GM12878 (cell line): ENCODE measurements at regions of chr17 and their contacts with region 1.

Region 1: DNA sequence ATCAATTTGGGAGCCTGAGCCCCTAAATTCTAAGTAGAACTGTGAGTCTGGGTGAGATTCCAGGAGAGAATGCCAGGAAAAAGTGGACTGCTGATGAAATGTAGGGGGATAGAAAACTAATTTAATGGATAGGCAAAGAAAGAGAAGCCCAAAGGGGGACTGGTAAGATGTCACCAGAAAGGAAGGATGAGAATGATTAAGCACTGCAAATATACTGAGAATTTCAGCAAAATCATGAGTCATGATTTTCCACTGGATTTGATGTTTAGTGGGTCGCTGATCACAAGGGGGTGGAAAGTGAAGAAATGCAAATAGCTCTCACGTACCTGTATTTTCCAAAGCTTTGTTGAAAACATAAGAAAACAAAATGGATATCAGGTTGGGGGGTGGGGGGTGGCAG is 201.8 kb downstream of the SLC39A11 start:
- DNase-seq: no peak
- ATAC-seq: no peak
- H3K4me3 ChIP-seq: no peak overlapping the region
- H3K27ac ChIP-seq: no peak overlapping the region
- H3K4me1 ChIP-seq: no peaks in the 10 kb centered on the region
- H3K27me3 ChIP-seq: no peaks in the 10 kb centered on the region
- CTCF ChIP-seq: no peak
- EP300 ChIP-seq: no peak
- POLR2A ChIP-seq: no peak
- RAD21 ChIP-seq: no peak

Region 2: GRCh38 chr17:72850410-72851118 is 40.1 kb before region 1 on chr17:
- CTCF ChIA-PET with region 1: no interaction called
- POLR2A ChIA-PET with region 1: no interaction called
- RAD21 ChIA-PET with region 1: no interaction called
- SMC1A ChIA-PET with region 1: no interaction called
- in situ Hi-C with region 1: no loop called
- intact Hi-C with region 1: no loop called
- DNase-seq: no peak
- ATAC-seq: no peak
- H3K4me3 ChIP-seq: no peak overlapping the region
- H3K27ac ChIP-seq: no peak overlapping the region
- H3K4me1 ChIP-seq: no peaks in the 10 kb centered on the region
- H3K27me3 ChIP-seq: no peaks in the 10 kb centered on the region
- CTCF ChIP-seq: no peak
- EP300 ChIP-seq: no peak
- POLR2A ChIP-seq: no peak
- RAD21 ChIP-seq: no peak

Region 3: GRCh38 chr17:72872396-72872795 is 18.3 kb before region 1 on chr17:
- CTCF ChIA-PET with region 1: no interaction called
- POLR2A ChIA-PET with region 1: no interaction called
- RAD21 ChIA-PET with region 1: no interaction called
- SMC1A ChIA-PET with region 1: no interaction called
- in situ Hi-C with region 1: no loop called
- intact Hi-C with region 1: no loop called
- DNase-seq: no peak
- ATAC-seq: no peak
- H3K4me3 ChIP-seq: no peak overlapping the region
- H3K27ac ChIP-seq: no peak overlapping the region
- H3K4me1 ChIP-seq: no peaks in the 10 kb centered on the region; the same call in 1 of the 2 replicates
- H3K27me3 ChIP-seq: no peaks in the 10 kb centered on the region
- CTCF ChIP-seq: no peak
- EP300 ChIP-seq: no peak
- POLR2A ChIP-seq: no peak
- RAD21 ChIP-seq: no peak

Region 4: GRCh38 chr17:72931163-72931562 is 40.5 kb after region 1 on chr17:
- CTCF ChIA-PET with region 1: no interaction called
- POLR2A ChIA-PET with region 1: no interaction called
- RAD21 ChIA-PET with region 1: no interaction called
- SMC1A ChIA-PET with region 1: no interaction called
- in situ Hi-C with region 1: no loop called
- intact Hi-C with region 1: no loop called
- DNase-seq: peak; percentile 25
- ATAC-seq: peak; percentile 68
- H3K4me3 ChIP-seq: no peak overlapping the region
- H3K27ac ChIP-seq: no peak overlapping the region
- H3K4me1 ChIP-seq: peaks cover 6% of the 10 kb centered on the region; the same call in 1 of the 2 replicates
- H3K27me3 ChIP-seq: no peaks in the 10 kb centered on the region
- CTCF ChIP-seq: no peak
- EP300 ChIP-seq: no peak
- POLR2A ChIP-seq: no peak
- RAD21 ChIP-seq: no peak

Region 5: DNA sequence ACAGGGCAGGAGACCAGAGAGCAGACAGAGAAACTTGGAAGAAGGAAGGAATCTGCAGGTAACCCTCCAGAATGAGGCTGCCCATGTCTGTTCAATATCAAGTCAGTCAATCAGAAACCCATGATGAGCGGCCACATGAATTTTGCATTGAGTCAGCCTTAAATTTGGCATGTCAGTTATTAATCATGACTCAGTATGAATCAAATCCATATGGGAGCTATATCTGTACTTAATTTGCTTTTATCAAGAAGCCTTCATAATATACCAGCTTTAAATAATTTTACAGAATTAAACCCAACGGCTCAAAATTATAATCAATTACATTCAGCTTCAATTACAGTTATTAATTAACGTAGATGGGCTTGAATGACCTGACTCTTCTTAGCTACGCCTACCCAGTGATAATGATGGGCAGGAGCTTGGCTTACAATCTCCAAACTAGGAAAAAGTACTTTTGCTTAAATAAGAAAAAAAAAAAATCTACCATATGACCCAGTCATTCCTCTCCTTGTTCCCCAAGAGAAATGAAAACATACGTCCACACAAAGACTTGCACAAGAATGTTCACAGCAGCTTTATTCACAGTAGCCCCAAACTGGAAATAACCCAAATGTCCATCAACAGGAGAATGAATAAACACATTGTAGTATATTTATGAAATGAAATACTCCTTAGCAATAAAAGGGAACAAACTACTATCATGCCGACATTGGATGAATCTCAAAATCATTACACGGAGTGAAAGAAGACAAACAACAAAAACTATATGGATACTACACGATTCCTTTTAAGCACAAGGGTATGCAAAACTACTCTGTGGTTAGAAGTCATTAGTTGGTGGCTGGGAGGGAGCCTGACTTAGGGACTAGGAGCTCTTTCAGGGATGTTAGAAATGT is 153.2 kb after region 1 on chr17:
- CTCF ChIA-PET with region 1: no interaction called
- POLR2A ChIA-PET with region 1: interaction called, 11 read pairs
- RAD21 ChIA-PET with region 1: no interaction called
- SMC1A ChIA-PET with region 1: no interaction called
- in situ Hi-C with region 1: no loop called
- intact Hi-C with region 1: no loop called
- DNase-seq: no peak
- ATAC-seq: peak; percentile 64
- H3K4me3 ChIP-seq: no peak overlapping the region
- H3K27ac ChIP-seq: peak overlapping the region; percentile 31; the same call in 1 of the 2 replicates
- H3K4me1 ChIP-seq: peaks cover 7% of the 10 kb centered on the region
- H3K27me3 ChIP-seq: no peaks in the 10 kb centered on the region
- CTCF ChIP-seq: no peak
- EP300 ChIP-seq: no peak
- POLR2A ChIP-seq: no peak
- RAD21 ChIP-seq: no peak

Region 6: DNA sequence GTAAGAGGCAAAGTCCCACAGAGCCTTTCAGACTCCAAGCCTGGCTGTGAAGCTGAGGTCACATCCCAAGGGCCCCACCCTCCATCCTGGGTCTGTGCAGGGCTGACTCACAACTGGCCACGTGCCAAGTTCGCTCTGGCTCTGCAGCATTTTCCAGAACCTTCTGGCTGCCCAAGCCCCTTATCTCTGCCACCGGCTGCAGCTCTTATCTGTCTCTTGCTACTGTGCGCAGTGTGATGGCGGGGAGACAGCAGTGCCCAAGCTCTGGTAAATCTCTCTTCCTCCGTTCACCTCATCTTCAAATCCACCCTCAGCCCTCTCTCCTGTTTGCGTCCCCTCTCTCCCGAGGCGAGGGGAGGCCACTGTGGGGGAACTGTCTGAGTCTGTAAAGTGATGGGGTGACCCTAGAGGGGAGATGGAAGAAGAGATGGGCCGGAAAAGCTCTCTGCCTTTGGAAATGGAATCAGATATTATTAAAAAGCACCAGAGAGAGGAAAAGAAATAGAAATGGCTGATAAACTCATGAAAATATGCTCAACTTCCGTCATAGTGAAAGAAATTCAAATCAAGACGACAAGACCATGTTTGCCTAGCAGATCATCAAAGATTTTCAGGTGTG is 583.8 kb after region 1 on chr17:
- CTCF ChIA-PET with region 1: no interaction called
- POLR2A ChIA-PET with region 1: no interaction called
- RAD21 ChIA-PET with region 1: no interaction called
- SMC1A ChIA-PET with region 1: no interaction called
- in situ Hi-C with region 1: no loop called
- intact Hi-C with region 1: no loop called
- DNase-seq: no peak
- ATAC-seq: no peak
- H3K4me3 ChIP-seq: no peak overlapping the region
- H3K27ac ChIP-seq: no peak overlapping the region
- H3K4me1 ChIP-seq: no peaks in the 10 kb centered on the region
- H3K27me3 ChIP-seq: peaks cover 0 to 2% of the 10 kb centered on the region in 2 experiments; a peak in 2 of 4 replicates
- CTCF ChIP-seq: no peak
- EP300 ChIP-seq: no peak
- POLR2A ChIP-seq: no peak
- RAD21 ChIP-seq: no peak